Natural killer cell (primary cell): ENCODE measurements at regions of chr11 and their contacts with region 1.

Region 1: DNA sequence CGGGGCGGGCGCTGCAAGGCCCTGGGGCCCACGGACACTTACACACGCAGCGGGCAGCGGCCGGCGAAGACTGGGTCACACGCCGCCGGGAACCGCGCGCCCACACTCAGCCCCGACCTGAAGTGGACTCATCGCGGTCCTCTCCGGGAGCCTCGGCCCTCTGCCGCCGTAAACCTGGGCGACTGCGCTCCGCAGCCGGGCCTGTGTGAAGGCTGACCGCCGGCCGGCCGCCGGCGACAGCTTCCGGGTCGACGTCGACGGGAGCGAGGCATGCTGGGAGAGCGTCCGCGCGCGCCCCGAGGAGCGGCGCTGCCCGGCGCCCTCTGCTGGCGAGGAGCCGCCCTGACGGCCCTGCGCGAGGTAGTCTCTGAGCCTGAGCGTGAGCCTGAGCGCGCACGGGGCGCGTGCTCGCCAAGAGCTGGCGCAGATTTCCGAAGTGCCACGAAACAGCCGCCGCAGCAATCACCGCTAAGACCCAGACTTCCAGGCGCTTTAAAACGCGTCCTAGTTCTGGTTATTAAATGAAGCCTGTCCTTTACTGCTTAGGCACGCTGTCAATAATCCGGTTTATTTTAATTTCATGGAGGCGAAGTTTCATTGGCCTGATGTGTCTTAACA is at the start of gene SNX19:
- DNase-seq: peak; percentile 95 to 96
- ATAC-seq: peak; percentile 99 to 100 (median 99)
- H3K4me3 ChIP-seq: peak within 1 kb of the TSS; percentile 66
- H3K4me3 Mint-ChIP-seq: peak within 1 kb of the TSS; percentile 94
- H3K27ac ChIP-seq: peak within 1 kb of the TSS; percentile 89
- H3K27ac Mint-ChIP-seq: peak within 1 kb of the TSS; percentile 86 to 90
- H3K4me1 ChIP-seq: peaks cover 18% of the 10 kb centered on the region
- H3K4me1 Mint-ChIP-seq: peaks cover 15 to 25% of the 10 kb centered on the region in 2 donors
- H3K27me3 ChIP-seq: no peaks in the 10 kb centered on the region
- H3K27me3 Mint-ChIP-seq: peaks cover 16 to 37% of the 10 kb centered on the region in 2 donors
- CTCF ChIP-seq: peak; percentile 95
- total RNA-seq, gene SNX19: 65.4 to 76.6 (median 72.0) TPM

Region 2: DNA sequence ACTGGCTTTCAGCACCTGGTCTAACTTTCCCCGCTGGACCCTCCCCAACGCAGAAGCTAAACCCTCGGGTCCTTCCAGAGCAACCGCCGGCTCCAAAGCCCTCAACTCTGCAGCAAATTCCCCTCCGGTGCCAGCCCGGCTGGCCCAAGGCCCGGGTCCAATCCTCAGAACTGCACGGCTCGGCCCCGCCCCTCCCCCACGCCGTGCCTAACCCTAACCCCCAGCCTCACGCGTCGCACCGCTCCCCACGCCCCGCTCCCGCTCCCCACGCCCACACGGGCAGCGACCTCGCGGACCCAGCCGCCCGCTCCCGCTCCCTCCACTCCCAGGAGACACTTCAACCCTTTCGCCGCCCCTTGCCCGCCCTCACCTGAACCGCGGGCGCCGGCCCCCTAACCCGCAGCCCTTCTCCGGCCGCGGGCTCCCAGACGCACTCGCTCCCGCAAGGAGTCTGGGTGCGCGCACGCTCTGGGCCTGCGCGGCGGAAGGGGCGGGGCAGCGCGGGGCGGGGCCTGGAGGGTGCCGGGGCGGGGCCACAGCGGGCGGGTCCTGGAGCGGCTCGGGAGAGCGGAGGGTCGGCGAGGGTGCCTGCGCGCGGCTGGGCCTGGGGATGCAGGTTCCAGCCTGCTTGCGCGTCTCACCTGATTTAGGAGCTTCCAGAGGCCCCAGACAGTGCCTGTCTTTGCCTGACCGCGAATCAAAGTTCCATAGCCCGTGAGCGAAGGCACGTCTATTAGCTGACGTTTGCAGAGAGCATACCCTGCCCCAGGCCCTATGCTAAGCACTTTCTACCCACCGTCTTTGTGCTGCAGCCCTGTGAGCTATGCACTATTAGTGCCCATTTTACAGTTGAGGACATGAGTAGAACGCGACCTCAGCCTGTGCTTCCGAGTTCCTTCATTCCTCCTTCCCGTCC is 1021.0 kb before region 1 on chr11 and contains the start of gene NFRKB:
- intact Hi-C with region 1: loop called (anchors 5 kb)
- DNase-seq: peak; percentile 85 to 87
- ATAC-seq: peak; percentile 97 to 100 (median 97)
- H3K4me3 ChIP-seq: peak within 1 kb of the TSS; percentile 85
- H3K4me3 Mint-ChIP-seq: peak within 1 kb of the TSS; percentile 91
- H3K27ac ChIP-seq: peak within 1 kb of the TSS; percentile 34
- H3K27ac Mint-ChIP-seq: peak within 1 kb of the TSS; percentile 74 to 90
- H3K4me1 ChIP-seq: peaks cover 12% of the 10 kb centered on the region
- H3K4me1 Mint-ChIP-seq: peaks cover 25 to 34% of the 10 kb centered on the region in 2 donors
- H3K27me3 ChIP-seq: no peaks in the 10 kb centered on the region
- H3K27me3 Mint-ChIP-seq: no peaks in the 10 kb centered on the region
- CTCF ChIP-seq: no peak
- total RNA-seq, gene NFRKB: 26.9 to 36.3 (median 35.2) TPM